ENCODE measurements at regions of chr12 and their contacts with region 1.

Region 1: GRCh38 chr12:71415336-71416231 is 24.0 kb upstream of the LGR5 start:
- DNase-seq: peak; percentile 24
- ATAC-seq: peak; percentile 64
- H3K4me3 Mint-ChIP-seq: no peak overlapping the region
- H3K27ac Mint-ChIP-seq: no peak overlapping the region
- H3K4me1 Mint-ChIP-seq: no peaks in the 10 kb centered on the region
- H3K27me3 Mint-ChIP-seq: peaks cover 7% of the 10 kb centered on the region

Region 2: GRCh38 chr12:71371122-71371521 is 44.5 kb before region 1 on chr12:
- CTCF ChIA-PET with region 1: no interaction called
- POLR2A ChIA-PET with region 1: no interaction called
- intact Hi-C with region 1: no loop called
- DNase-seq: no peak
- ATAC-seq: no peak
- H3K4me3 Mint-ChIP-seq: no peak overlapping the region
- H3K27ac Mint-ChIP-seq: no peak overlapping the region
- H3K4me1 Mint-ChIP-seq: no peaks in the 10 kb centered on the region
- H3K27me3 Mint-ChIP-seq: peaks cover 6% of the 10 kb centered on the region

Region 3: GRCh38 chr12:71392521-71393145 is 23.0 kb before region 1 on chr12:
- CTCF ChIA-PET with region 1: interaction called, 10 read pairs
- POLR2A ChIA-PET with region 1: no interaction called
- intact Hi-C with region 1: no loop called
- DNase-seq: peak; percentile 6
- ATAC-seq: peak; percentile 69
- H3K4me3 Mint-ChIP-seq: no peak overlapping the region
- H3K27ac Mint-ChIP-seq: no peak overlapping the region
- H3K4me1 Mint-ChIP-seq: no peaks in the 10 kb centered on the region
- H3K27me3 Mint-ChIP-seq: peaks cover 11% of the 10 kb centered on the region

Region 4: DNA sequence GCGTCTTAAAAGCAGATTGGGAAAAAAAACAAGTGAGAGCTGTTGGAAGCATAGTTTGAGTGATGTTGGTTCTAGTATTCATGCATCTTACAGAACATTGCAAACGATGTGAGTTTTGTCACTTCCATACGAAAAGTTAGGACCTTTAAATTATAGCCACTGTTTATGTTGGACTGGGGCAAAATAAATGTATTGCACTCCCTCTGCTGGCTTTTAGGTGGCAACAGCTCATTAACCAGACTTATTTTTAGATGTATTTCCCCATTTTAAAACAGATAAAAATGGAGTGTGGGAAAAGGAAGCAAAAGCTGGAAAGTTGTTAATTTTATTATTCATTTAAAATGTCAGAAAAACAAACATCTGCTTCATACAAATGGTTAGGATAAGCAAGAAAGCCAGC is 135.9 kb after region 1 on chr12:
- CTCF ChIA-PET with region 1: interaction called, 4 read pairs
- POLR2A ChIA-PET with region 1: no interaction called
- intact Hi-C with region 1: loop called (anchors 1 to 5 kb)
- DNase-seq: no peak
- ATAC-seq: no peak
- H3K4me3 Mint-ChIP-seq: no peak overlapping the region
- H3K27ac Mint-ChIP-seq: no peak overlapping the region
- H3K4me1 Mint-ChIP-seq: peaks cover 2% of the 10 kb centered on the region
- H3K27me3 Mint-ChIP-seq: no peaks in the 10 kb centered on the region

Region 5: DNA sequence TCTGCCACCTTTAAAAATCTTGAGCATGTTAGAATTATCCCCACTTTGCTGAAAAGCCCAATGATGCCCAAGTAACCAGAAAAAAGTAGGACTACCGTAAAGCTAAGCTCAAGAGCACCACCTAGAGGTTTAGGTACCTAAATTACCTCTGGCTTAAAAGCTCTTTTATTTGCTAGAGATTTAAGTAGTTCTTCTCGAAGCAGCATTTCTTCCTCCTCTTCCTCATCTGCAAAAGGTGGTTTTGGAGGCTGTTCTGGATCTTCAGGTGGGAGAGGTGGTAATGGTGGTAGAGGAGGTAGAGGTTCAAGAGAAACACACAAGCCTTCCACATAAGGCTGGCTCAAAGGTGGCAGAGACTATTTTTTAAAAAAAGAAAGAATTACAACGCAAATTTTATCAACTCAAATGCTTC is 221.1 kb after region 1 on chr12:
- CTCF ChIA-PET with region 1: interaction called, 10 read pairs
- POLR2A ChIA-PET with region 1: no interaction called
- intact Hi-C with region 1: loop called (anchors 1 kb)
- DNase-seq: no peak
- ATAC-seq: peak; percentile 43
- H3K4me3 Mint-ChIP-seq: no peak overlapping the region
- H3K27ac Mint-ChIP-seq: peak overlapping the region; percentile 73
- H3K4me1 Mint-ChIP-seq: peaks cover 21% of the 10 kb centered on the region
- H3K27me3 Mint-ChIP-seq: no peaks in the 10 kb centered on the region

Region 6: DNA sequence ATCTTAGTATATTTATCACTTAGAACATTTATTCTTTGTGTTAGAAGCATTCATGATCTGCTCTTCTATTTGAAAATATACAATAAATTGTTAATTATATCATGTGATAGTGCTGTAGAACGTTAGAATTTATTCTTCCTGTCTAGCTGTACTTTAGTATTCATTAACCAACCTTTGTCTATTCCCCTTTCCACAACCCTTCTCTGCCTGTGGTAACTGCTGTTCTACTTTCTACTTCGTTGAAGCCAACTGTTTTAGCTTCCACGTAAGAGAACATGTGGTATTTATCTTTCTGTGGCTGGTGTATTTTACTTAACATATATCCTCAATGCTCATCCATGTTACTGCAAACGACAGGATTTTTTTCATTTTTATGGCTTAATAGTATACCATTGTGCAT is 442.1 kb after region 1 on chr12:
- CTCF ChIA-PET with region 1: no interaction called
- POLR2A ChIA-PET with region 1: no interaction called
- intact Hi-C with region 1: no loop called
- DNase-seq: no peak
- ATAC-seq: no peak
- H3K4me3 Mint-ChIP-seq: no peak overlapping the region
- H3K27ac Mint-ChIP-seq: no peak overlapping the region
- H3K4me1 Mint-ChIP-seq: peaks cover 58% of the 10 kb centered on the region
- H3K27me3 Mint-ChIP-seq: no peaks in the 10 kb centered on the region